Right ventricle myocardium inferior (tissue), 1 donor: ENCODE measurements at regions of chr1 and their contacts with region 1.

Region 1: DNA sequence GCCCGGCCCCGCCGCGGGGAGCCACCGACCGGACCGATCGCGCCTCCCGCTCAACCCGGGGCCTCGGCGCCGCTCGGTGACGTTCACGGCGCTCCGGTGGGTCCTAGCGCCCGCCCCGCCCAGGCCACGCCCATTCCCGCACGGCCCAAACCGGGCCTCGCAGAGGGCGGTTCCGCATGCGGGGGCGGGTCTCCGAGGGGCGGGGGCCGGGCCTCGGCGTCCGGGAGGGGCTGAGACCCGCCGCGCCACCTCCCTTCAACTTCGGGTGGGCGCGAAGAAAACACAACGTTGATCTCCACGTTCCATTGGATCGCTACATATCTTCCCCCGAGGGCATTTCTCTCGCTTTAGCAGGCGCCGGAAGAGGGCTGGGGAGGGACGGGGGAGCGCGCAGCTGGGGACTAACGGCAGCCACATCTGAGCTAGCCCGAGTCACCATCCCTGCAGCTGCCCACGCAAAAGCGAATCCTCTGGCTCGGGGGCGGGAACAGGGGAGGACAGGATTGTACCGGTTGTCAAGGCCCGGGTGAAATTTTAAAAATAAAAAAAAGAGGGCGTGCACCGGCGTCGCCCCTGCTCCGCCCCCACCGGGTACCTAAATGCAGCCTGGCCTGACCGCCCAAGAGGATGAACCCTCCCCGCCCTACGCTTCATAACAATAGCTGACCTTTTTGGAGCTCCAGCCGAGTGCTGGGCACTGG is at the start of gene MAD2L2:
- DNase-seq: peak; percentile 96
- ATAC-seq: peak; percentile 98
- total RNA-seq, gene MAD2L2: 20.1 TPM

Region 2: DNA sequence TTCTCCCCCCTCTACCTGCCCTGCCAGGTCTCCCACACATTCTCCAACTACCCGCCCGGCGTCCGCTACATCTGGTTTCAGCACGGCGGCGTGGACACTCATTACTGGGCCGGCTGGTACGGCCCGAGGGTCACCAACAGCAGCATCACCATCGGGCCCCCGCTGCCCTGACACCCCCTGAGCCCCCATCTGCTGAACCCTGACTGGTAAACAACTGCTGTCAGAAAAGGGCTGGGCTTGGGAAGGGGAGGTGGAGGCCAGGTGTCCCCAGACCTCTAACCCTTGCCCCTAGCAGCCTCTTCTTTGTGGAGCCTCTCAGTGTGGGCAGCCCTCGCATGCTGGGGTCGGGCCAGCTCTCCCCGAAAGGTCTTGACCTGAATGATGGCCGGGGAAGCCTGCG is 20.1 kb before region 1 on chr1:
- intact Hi-C with region 1: loop called (anchors 1 kb)
- DNase-seq: no peak
- ATAC-seq: no peak

Region 3: DNA sequence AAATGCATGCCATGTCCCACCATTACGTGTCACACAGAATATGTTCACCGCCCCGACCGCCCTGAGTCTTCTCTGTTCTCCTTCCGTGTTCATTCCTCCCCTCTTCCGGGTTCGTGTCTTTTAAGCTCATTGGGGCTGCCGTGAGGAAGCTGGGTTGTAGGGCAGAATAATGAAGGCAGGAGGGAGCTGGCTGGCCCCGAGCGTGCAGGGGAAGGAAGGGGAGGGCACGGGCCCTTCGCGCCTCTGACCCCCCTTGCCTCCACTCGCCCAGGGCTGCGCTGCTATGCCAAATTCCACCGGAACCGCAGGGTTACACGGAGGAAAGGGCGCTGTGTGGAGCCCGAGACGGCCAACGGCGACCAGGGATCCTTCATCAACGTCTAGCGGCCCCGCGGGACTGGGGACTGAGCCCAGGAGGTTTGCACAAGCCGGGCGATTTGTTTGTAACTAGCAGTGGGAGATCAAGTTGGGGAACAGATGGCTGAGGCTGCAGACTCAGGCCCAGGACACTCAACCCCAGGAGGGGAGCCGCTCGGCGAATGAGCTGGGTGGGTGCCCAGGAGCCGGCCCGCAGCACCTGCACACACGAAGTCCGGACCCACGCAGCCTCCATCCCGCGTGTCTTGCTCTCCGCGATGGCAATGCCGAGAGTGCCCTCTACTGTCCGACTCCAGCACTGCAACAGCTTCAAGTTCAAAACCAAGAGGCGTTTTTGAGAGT is 38.3 kb after region 1 on chr1:
- intact Hi-C with region 1: loop called (anchors 5 kb)
- DNase-seq: peak; percentile 94
- ATAC-seq: peak; percentile 77

Region 4: DNA sequence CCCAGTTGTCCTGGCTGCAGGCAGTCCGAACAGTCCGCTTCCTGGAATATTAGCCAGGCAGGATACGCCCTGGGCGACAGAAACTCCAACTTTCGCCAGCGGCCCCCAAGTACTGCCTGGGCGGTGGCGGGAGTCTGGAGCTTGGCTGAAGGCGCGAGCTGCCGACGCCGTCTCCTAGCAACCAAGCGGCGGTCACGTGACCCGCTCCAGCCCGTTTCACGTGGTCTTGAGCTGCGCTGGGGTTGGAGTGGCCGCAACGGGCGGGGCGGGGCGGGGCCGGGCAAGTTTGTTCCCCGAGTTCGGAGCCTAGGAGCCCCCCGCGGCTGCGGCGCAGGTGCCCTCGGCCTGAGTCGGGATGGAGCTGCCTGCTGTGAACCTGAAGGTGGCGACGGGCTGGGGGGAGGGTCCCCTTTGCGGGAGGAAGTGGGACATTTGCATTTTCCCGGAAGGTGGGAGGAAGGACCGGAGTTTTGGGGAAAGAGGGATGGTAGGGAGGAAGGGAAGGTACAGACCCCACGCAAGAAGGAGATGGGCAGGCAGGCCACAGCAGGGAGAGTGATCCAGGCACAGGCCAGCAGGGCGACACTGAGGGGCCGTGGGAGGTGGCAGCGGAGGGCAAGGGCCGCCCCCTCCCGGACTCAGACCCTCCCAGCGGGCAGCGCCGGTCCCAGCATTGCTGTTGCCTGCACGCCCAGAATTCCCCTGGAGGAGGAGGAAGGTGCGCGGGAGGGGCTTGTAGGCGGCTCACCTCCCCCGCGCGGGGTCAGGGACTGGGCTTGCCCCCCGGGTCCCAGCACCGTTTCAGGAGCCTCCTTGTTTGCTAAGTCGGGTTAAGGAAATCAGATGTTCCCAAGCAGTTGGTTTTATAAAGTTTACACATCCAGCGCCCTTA is 54.9 kb after region 1 on chr1 and contains the start of gene AGTRAP:
- intact Hi-C with region 1: loop called (anchors 2 kb)
- DNase-seq: peak; percentile 99
- ATAC-seq: peak; percentile 89
- total RNA-seq, gene AGTRAP: 18.3 TPM